ENCODE measurements at regions of chr2 and their contacts with region 1.

Region 1: GRCh38 chr2:43131024-43131889 is 95.1 kb downstream of the ZFP36L2 start:
- DNase-seq: peak; percentile 93
- H3K4me3 Mint-ChIP-seq: peak overlapping the region; percentile 64
- H3K27ac Mint-ChIP-seq: peak overlapping the region; percentile 84
- H3K4me1 Mint-ChIP-seq: peaks cover 78% of the 10 kb centered on the region
- H3K27me3 Mint-ChIP-seq: no peaks in the 10 kb centered on the region

Region 2: GRCh38 chr2:42810121-42810970 is 320.9 kb before region 1 on chr2:
- intact Hi-C with region 1: loop called (anchors 5 kb)
- DNase-seq: peak; percentile 99
- H3K4me3 Mint-ChIP-seq: peak overlapping the region; percentile 97
- H3K27ac Mint-ChIP-seq: peak overlapping the region; percentile 100
- H3K4me1 Mint-ChIP-seq: peaks cover 20% of the 10 kb centered on the region
- H3K27me3 Mint-ChIP-seq: peaks cover 15% of the 10 kb centered on the region

Region 3: DNA sequence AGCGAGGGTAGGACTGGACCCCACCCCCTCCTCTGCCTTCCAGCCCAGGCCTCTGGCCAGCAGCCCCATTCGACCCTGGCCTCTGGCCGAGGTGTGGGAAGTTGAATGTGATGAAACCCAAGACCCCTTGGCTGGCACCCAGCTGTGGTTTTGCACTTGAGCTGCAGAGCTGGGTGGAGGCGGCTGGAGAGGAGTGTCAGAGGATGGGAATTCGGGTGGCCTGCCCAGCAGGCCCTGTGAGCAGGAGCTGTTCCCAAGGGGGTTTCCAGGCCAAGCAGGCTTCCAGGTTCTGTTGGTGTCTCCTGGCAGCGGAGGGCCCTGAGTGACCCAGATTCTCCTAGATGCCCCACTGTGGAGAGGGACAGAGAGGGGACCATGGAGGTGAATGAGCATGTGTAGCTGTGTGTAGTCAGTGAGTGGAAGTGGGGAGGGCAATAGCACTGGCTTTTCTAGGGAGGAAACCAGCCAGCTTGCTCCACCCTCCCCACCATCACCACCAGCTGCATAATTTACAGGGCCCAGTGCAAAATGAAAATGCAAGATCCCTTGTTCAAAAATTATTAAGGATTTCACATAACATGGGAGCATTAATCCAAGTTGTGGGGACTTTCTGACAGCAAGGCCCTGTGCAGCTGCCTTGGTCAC is 166.7 kb before region 1 on chr2:
- intact Hi-C with region 1: no loop called
- DNase-seq: no peak
- H3K4me3 Mint-ChIP-seq: no peak overlapping the region
- H3K27ac Mint-ChIP-seq: no peak overlapping the region
- H3K4me1 Mint-ChIP-seq: peaks cover 6% of the 10 kb centered on the region
- H3K27me3 Mint-ChIP-seq: peaks cover 20% of the 10 kb centered on the region

Region 4: DNA sequence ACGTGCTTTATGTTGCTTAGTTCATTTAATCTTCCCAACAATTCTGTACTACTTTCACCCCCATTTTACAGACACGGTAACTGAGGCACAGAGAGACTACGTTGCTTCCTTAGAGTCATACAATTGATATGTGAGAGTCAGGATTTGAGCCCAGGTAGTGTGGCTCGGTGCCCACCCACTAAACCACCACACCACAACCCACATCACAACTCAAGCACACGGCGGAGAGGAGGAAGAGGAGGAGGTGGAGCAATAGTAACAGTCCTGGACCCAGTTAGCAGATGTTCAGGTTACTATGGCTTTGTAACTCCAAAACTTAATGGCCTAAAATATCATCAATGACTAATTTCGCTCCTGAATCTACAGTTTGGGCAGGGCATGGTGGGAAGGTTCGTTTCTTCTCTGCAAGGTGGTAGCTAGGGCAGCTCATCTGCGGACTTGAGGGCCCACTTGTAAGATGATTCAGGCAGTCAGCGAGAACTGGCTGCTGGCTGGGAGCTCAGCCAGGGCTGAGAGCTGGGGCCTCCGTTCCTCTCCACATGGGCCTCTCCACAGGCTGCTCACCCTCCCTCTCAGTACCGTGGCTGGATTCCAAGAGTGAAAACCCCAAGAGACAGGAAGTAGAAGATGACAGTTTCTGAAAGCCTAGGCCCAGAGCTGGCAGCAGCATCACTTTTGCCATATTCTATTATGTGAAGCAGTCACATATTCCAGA is 71.9 kb before region 1 on chr2:
- intact Hi-C with region 1: loop called (anchors 5 kb)
- DNase-seq: peak; percentile 80
- H3K4me3 Mint-ChIP-seq: peak overlapping the region; percentile 10
- H3K27ac Mint-ChIP-seq: peak overlapping the region; percentile 35
- H3K4me1 Mint-ChIP-seq: peaks cover 22% of the 10 kb centered on the region
- H3K27me3 Mint-ChIP-seq: peaks cover 5% of the 10 kb centered on the region

Region 5: DNA sequence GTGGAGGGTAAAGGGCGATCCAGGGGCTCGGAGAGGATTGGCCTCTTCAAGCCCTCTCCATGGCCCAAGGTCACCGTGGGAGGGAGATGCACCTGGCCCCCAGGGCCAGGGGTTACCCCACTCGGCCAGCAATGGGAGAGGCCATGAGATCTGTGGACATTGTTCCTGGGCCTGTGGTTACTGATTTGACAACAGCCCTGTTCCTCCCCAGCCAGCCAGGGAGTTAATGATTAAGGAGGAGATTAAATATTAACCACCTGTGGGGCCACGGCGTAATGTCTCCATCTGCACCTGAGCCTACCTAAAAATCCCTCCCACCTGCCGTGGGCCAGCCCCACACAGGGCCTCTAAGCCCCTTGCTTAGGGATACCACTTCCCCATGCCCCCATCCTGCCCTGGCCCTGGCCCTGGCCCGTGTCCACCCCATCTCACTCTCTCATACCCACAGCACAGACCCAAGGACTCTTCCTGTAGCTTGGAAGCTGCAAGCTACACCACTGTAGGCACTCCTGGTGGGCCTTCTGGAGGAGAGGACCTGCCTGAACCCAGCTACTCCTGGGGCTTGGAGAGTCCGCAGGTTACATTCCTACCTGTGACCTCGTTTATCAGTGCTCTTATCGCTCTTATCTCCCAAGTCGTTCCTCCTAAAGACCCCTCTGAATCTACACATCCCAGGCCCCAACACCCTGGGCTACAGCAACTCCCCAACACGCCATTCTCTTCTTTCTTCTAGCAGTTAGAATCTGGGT is 63.0 kb after region 1 on chr2:
- intact Hi-C with region 1: loop called (anchors 1 kb)
- DNase-seq: no peak
- H3K4me3 Mint-ChIP-seq: peak overlapping the region; percentile 84
- H3K27ac Mint-ChIP-seq: peak overlapping the region; percentile 93
- H3K4me1 Mint-ChIP-seq: peaks cover 49% of the 10 kb centered on the region
- H3K27me3 Mint-ChIP-seq: no peaks in the 10 kb centered on the region

Region 6: DNA sequence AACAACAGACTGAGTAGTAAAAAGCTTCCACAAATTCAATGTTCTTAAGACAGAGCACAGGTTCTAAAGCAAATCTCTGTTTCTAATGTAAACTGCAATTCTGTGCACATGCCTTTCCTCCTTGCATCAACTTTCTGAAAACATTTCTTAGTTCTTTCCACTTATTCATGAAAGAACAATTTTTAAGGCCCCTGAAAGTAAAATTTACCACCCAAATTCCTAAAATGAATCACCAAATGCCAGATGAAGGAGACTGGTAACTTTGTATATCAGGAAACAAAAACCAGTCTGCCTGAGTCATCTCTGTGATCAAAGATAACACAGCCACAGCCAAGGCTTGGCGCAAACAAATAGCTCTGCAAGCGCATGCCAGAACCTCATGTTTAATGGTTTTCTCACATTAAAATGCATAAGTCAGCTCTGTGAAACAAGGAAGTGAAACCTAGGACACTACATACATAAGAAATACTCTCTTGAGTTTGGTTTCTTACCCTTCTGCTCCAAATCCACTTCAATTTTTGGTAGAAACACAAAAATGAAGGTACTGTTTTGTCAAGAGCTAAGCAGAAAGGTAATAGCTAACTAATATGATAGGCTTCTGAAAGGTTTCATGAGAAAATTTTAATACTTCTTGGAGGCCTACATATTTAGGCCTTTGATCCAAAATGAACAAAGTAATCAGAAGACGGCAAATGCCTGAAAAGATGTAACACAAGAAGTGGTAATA is 295.2 kb after region 1 on chr2:
- intact Hi-C with region 1: loop called (anchors 1 kb)
- DNase-seq: peak; percentile 93
- H3K4me3 Mint-ChIP-seq: peak overlapping the region; percentile 25
- H3K27ac Mint-ChIP-seq: peak overlapping the region; percentile 49
- H3K4me1 Mint-ChIP-seq: peaks cover 41% of the 10 kb centered on the region
- H3K27me3 Mint-ChIP-seq: peaks cover 4% of the 10 kb centered on the region

Region 7: DNA sequence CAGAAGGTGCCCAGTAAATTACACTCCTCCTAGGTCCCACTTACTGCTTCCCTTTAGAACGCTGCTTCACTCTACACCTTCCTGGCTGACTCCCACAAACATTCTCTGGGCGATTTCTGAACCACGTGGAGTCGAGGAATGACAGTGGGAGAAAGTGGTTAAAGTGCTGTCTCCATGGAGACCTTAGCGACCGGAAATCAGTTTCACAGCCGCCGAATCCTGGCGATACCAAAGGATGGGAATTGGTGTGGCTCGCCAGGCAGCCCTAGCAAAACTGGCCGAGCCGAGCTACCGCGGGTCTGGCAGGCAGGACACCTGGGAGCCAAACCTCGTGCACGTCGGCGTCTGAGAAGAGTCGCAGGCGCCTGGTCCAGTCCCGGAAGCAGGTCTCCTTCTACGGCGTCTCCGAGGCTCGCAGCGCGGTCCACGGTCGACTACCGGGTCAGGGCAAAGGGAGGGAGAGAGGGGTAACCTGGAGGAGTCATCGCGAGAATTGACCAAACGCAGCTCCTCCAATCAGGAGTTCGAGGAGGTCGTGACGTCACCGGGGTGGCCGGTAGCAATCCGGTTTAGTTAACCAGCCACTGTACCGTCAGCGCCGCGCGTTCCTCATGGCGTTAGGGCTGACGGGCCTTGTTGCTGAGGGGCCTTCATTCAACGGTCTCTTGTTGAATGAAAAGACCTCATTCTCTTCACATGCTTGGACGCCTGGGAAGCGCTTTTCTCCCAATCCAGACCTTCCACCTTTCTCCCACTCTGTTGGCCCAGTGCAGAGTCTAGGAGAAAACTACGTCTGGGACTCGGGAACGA is 464.6 kb after region 1 on chr2 and contains the start of gene THADA:
- intact Hi-C with region 1: loop called (anchors 2 kb)
- DNase-seq: peak; percentile 99
- H3K4me3 Mint-ChIP-seq: peak within 1 kb of the TSS; percentile 98
- H3K27ac Mint-ChIP-seq: peak within 1 kb of the TSS; percentile 99
- H3K4me1 Mint-ChIP-seq: peaks cover 28% of the 10 kb centered on the region
- H3K27me3 Mint-ChIP-seq: no peaks in the 10 kb centered on the region
- total RNA-seq, gene THADA: 41.6 and 55.4 TPM in 2 replicates

Measured in activated CD4-positive, alpha-beta T cell treated with anti-CD3 and anti-CD28 coated beads, Interleukin-2, amount 10 ng/mL, durations not matched to agents 24 days and 14 days (primary cell).